Dendritic cell treated with granulocyte-macrophage colony-stimulating factor and Interleukin-4, amounts not matched to agents 40 ng/mL and 50 ng/mL, for 4 days (primary cell): ENCODE measurements at regions of chr12 and their contacts with region 1.

Region 1: DNA sequence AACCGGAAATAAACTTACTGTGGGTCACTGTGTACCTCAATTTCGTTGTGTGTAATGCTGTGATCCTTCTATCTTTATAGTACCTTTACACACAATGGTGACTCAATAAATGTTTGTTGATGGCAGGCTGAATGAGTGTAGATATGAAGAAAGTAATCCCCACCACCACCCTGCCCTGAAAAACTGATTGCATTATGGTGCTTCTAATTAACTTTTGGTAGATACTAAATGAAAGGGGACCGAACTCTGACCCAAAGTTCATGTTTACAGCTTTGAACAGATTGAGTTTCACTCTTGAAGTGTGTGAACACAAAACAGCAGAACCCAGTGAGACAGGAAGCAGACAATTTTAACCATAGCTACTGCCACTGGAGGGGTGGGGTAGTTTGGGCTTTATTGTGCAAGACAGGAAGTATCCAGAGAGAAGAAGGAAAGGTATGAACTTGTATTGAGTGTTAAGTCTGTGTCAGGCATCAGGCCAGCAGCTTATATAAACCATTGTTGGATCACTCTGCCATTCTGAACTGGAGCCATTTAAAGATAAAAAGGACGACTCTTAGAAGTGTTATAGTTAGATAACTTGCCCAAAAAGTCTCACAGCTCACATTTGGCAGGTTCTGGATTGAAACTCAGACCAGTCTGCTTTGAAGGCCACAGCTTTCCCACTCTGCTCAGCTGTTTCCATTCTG is 197.0 kb upstream of the AMIGO2 start:
- H3K4me3 Mint-ChIP-seq: peak overlapping the region; percentile 7
- H3K27ac Mint-ChIP-seq: peak overlapping the region; percentile 84
- H3K4me1 Mint-ChIP-seq: peaks cover 84% of the 10 kb centered on the region
- H3K27me3 Mint-ChIP-seq: no peaks in the 10 kb centered on the region

Region 2: GRCh38 chr12:47216150-47216677 is 60.6 kb before region 1 on chr12:
- intact Hi-C with region 1: loop called (anchors 5 kb)
- H3K4me3 Mint-ChIP-seq: peak overlapping the region; percentile 64
- H3K27ac Mint-ChIP-seq: peak overlapping the region; percentile 85
- H3K4me1 Mint-ChIP-seq: peaks cover 48% of the 10 kb centered on the region
- H3K27me3 Mint-ChIP-seq: no peaks in the 10 kb centered on the region

Region 3: GRCh38 chr12:47362126-47362705 is 85.5 kb after region 1 on chr12:
- intact Hi-C with region 1: no loop called
- H3K4me3 Mint-ChIP-seq: no peak overlapping the region
- H3K27ac Mint-ChIP-seq: peak overlapping the region; percentile 88
- H3K4me1 Mint-ChIP-seq: peaks cover 43% of the 10 kb centered on the region
- H3K27me3 Mint-ChIP-seq: no peaks in the 10 kb centered on the region